Heart left ventricle (tissue), 16 donors: ENCODE measurements at regions of chr3 and their contacts with region 1.

Region 1: GRCh38 chr3:114730397-114730796 is 416.7 kb downstream of the ZBTB20 start:
- DNase-seq: no peak
- ATAC-seq: peak in 3 of 4 donors; percentile 38 to 75 (median 61)
- H3K4me3 ChIP-seq: no peak overlapping the region
- H3K27ac ChIP-seq: no peak overlapping the region
- H3K4me1 ChIP-seq: peaks cover 0 to 54% (median 22%) of the 10 kb centered on the region in 12 donors
- H3K27me3 ChIP-seq: no peaks in the 10 kb centered on the region
- CTCF ChIP-seq: no peak
- POLR2A ChIP-seq: no peak

Region 2: DNA sequence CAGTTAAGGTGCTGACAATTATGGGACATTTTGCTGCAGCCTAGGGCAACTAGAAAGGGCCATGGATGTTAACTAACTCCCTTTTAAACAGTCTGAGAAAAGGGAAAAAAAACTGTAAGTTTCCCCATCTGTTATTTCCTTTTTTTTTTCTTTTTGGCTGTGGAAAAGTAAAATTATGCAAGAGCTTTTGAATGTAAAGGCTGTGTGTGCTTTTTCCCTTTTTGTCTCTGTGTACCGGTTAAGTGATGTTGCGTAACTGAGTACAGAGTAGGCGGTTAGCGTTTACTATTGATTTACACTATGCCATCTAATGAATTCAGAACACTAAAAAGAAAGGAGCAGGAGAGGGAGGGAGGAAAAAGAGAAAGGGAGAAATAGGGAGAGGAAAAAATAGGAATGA is 33.0 kb before region 1 on chr3:
- intact Hi-C with region 1: loop called in 1 of 10 experiments (anchors 5 kb)
- DNase-seq: no peak
- ATAC-seq: peak in 1 of 4 donors; percentile 46
- H3K4me3 ChIP-seq: peak overlapping the region in 1 of 12 donors; percentile 18
- H3K27ac ChIP-seq: peak overlapping the region in 1 of 12 donors; percentile 67
- H3K4me1 ChIP-seq: peaks cover 0 to 35% (median 3%) of the 10 kb centered on the region in 12 donors
- H3K27me3 ChIP-seq: no peaks in the 10 kb centered on the region
- CTCF ChIP-seq: no peak
- POLR2A ChIP-seq: no peak